PC-9 (cell line): ENCODE measurements at regions of chr20 and their contacts with region 1.

Region 1: DNA sequence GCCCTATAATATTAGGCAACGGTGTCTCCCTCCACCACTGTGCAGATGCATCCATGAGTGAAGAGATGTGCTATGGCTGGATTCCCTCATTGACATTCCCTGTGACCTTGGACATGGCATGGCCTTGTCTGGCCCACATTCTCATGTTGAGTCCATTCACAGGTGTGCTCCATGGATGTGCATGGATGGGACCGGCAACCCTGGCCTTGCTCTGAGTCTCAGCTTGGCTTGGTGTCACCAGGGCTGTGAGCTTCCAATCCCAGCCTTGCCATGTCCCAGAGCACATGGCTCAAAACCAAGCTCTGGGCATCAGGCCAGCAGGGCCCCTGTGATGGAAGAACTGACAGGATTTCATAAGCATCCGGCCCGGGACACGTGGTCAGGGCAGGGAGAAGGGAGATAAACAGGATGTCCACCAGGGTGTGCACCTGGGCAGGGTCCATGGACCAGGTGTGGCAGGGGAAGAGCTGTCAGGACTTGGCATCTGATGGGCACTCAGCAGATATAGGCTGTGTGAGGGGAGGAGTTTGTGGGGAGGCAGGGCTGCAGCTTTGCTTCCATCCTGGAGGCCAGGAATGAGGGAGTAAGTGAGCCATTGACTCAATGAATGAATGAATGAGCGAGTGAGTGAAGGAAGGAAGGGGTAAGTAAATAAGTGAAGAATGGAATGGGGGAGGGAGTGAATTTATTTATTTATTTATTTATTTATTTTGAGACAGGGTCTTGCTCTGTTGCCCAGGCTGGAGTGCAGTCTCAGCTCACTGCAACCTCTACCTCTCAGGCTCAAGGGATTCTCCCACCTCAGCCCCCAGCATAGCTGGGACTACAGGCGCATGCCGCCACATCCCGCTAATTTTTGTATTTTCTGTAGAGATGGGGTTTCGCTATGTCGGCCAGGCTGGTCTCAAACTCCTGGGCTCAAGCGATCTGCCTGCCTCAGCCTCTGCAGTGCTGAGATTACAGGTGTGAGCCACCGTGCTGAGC is 15.7 kb downstream of the NRSN2 start:
- DNase-seq: peak; percentile 91 to 97
- H3K4me3 ChIP-seq: peak overlapping the region; percentile 32; the same call in 1 of the 2 replicates
- H3K27ac ChIP-seq: peak overlapping the region; percentile 96
- H3K4me1 ChIP-seq: peaks cover 65% of the 10 kb centered on the region
- H3K27me3 ChIP-seq: no peaks in the 10 kb centered on the region
- CTCF ChIP-seq: peak; percentile 85

Region 2: GRCh38 chr20:381581-382290 is 19.2 kb after region 1 on chr20:
- CTCF ChIA-PET with region 1: interaction called, 9 read pairs
- POLR2A ChIA-PET with region 1: interaction called, 43 read pairs
- intact Hi-C with region 1: loop called (anchors 1 kb)
- DNase-seq: peak; percentile 65 to 84
- H3K4me3 ChIP-seq: peak overlapping the region; percentile 59
- H3K27ac ChIP-seq: peak overlapping the region; percentile 99
- H3K4me1 ChIP-seq: peaks cover 62% of the 10 kb centered on the region
- H3K27me3 ChIP-seq: no peaks in the 10 kb centered on the region
- CTCF ChIP-seq: no peak

Region 3: DNA sequence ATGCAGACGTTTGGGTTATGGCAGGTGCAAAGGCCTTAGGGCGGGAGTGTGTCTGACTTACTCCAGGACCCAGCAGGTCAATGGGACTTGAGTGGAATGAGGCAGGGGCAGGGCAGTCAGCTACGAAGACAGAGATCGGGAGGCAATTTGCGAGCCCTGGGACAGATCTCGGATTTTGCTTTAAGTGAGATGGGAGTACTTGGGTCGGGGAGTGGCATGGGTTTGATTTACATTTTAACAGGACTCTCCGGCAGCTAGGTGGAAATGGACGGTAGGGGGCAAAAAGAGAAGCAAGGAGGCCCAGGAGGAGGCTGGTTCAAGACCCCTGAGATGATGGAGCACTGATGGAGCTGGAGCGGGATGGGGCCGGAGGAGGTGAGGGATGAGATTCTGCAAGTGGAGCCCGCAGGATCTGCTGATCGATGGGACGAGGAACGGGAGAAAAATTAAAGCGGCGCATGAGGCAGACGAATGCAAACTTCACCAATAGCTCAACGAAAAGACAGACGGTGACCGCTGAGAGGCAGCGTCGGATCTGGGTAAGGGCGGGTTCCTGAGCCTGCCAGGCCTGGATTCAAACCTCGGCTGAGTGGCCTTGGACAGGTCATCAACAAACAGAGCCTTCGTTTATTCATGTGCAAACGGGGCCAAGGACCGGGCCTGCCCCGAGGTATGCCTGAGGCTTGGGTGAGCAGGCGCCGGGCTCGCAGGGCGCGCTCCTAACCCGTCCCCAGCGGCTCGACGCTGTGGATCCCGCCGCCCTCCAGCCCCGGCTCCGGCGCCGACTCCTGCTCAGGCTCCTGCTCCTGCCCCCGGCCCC is 44.8 kb after region 1 on chr20:
- CTCF ChIA-PET with region 1: interaction called, 10 read pairs
- POLR2A ChIA-PET with region 1: interaction called, 3 read pairs
- intact Hi-C with region 1: loop called (anchors 1 kb)
- DNase-seq: peak; percentile 48 to 78
- H3K4me3 ChIP-seq: peak overlapping the region; percentile 63
- H3K27ac ChIP-seq: peak overlapping the region; percentile 67
- H3K4me1 ChIP-seq: peaks cover 32% of the 10 kb centered on the region
- H3K27me3 ChIP-seq: no peaks in the 10 kb centered on the region
- CTCF ChIP-seq: peak; percentile 43; the same call in 1 of the 2 replicates

Region 4: GRCh38 chr20:431012-431904 is 68.7 kb after region 1 on chr20:
- CTCF ChIA-PET with region 1: interaction called, 19 read pairs
- POLR2A ChIA-PET with region 1: no interaction called
- intact Hi-C with region 1: loop called (anchors 1 kb)
- DNase-seq: peak; percentile 67 to 75
- H3K4me3 ChIP-seq: no peak overlapping the region
- H3K27ac ChIP-seq: no peak overlapping the region
- H3K4me1 ChIP-seq: no peaks in the 10 kb centered on the region
- H3K27me3 ChIP-seq: no peaks in the 10 kb centered on the region
- CTCF ChIP-seq: peak; percentile 80

Region 5: GRCh38 chr20:462199-462991 is 99.8 kb after region 1 on chr20 and contains the start of gene TBC1D20:
- CTCF ChIA-PET with region 1: no interaction called
- POLR2A ChIA-PET with region 1: interaction called, 29 read pairs
- intact Hi-C with region 1: no loop called
- DNase-seq: peak; percentile 63 to 83
- H3K4me3 ChIP-seq: peak within 1 kb of the TSS; percentile 100
- H3K27ac ChIP-seq: peak within 1 kb of the TSS; percentile 35
- H3K4me1 ChIP-seq: peaks cover 21% of the 10 kb centered on the region; the same call in 1 of the 2 replicates
- H3K27me3 ChIP-seq: peaks cover 4% of the 10 kb centered on the region; the same call in 1 of the 2 replicates
- CTCF ChIP-seq: no peak
- total RNA-seq, gene TBC1D20: 27.8 and 32.8 TPM in 2 replicates

Region 6: DNA sequence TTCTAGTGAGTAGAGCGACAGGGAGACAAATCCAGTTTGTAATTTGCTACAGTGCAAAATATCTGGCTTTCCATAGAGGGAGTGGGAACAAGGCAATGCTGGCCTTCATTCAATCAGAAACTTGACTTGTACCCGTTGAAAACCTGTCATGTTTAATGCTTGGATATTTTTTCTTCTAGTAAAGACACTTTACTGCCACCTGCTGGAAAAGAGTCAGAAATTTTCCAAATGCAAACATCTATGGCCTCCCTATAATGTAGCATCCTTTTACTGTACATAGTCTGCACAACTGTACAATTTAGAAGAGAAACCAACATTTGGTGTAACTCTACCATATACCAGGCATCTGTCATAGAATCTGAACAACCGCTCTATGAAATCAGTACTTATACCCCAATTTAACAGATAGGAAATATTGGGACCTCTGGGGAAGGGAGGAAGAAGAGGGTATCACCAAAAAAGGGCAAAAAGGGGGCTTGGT is 116.4 kb after region 1 on chr20:
- CTCF ChIA-PET with region 1: no interaction called
- POLR2A ChIA-PET with region 1: no interaction called
- intact Hi-C with region 1: no loop called
- DNase-seq: peak in 1 of 2 experiments; percentile 21
- H3K4me3 ChIP-seq: no peak overlapping the region
- H3K27ac ChIP-seq: no peak overlapping the region
- H3K4me1 ChIP-seq: no peaks in the 10 kb centered on the region
- H3K27me3 ChIP-seq: no peaks in the 10 kb centered on the region
- CTCF ChIP-seq: peak; percentile 79

Region 7: DNA sequence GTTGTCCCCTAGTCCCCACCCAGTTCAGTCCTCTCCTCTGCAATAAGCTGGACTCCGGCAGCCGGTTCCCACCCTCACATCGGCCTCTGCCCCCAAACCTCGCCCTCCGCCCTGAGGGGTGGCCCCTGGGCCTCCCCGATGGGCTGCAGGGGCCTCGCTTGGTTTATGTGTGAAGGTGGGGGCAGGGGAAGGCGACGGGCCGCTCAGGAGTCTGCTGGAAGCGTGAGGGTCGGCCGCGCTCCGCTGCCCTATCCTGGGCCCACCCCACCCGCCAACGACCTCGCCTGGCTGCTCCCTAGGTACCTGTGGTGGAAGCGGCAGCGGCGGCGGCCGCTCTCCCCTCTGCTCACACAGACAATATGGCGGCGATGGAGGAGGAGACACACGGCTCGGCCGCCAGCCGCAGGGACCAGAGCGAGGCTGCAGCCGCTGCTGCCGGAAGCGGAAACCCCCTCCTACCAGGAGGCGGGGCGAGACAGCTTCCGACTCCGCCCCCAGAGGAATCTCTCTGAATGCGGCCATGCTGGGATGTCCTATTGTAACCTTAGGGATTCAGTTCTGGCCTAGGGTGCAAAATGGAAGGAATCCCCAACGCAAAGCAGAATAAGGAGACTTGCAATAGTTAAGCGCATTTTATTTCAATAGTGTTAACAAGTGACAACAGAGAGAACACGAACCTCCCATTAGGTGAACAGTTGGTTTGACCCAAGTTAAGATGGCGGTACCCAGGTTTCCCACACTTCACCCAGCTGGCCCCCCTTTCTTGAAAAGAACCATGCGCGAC is 181.0 kb after region 1 on chr20 and contains the start of gene CSNK2A1:
- CTCF ChIA-PET with region 1: no interaction called
- POLR2A ChIA-PET with region 1: interaction called, 11 read pairs
- intact Hi-C with region 1: no loop called
- DNase-seq: peak; percentile 84 to 96
- H3K4me3 ChIP-seq: peak within 1 kb of the TSS; percentile 95
- H3K27ac ChIP-seq: peak within 1 kb of the TSS; percentile 62
- H3K4me1 ChIP-seq: peaks cover 11% of the 10 kb centered on the region
- H3K27me3 ChIP-seq: no peaks in the 10 kb centered on the region
- CTCF ChIP-seq: no peak
- total RNA-seq, gene CSNK2A1: 187 and 222 TPM in 2 replicates